ENCODE measurements at regions of chr4 and their contacts with region 1.

Region 1: GRCh38 chr4:94256828-94257227 is 49.2 kb downstream of the SMARCAD1 start:
- DNase-seq: peak in 1 of 9 donors; percentile 1
- ATAC-seq: no peak
- H3K4me3 ChIP-seq: no peak overlapping the region
- H3K4me3 Mint-ChIP-seq: no peak overlapping the region
- H3K27ac ChIP-seq: no peak overlapping the region
- H3K27ac Mint-ChIP-seq: peak overlapping the region in 1 of 9 donors; percentile 15
- H3K4me1 ChIP-seq: no peaks in the 10 kb centered on the region
- H3K4me1 Mint-ChIP-seq: peaks cover 0 to 9% (median under 1%) of the 10 kb centered on the region in 7 donors
- H3K27me3 ChIP-seq: no peaks in the 10 kb centered on the region
- H3K27me3 Mint-ChIP-seq: no peaks in the 10 kb centered on the region

Region 2: DNA sequence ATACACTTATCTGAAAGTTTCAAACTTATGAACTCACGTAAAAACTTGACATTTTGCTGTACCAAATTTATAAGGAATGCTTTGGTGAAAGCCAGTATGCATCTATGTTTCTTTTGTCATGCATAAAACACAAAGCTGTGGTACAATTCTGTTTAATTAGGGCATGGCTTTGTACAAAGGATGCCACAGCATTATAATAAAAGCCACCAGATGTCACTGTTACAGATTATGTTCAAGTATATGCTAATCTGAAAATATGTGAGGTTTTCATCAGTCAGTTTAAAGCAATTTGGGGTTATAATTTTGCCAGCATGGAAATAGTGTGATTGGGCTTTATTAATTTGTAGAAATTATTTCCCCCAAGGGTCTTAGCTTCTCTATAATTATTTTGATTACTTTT is 359.3 kb before region 1 on chr4:
- CTCF ChIA-PET with region 1: no interaction called
- POLR2A ChIA-PET with region 1: no interaction called
- intact Hi-C with region 1: loop called in 1 of 2 experiments (anchors 5 kb)
- DNase-seq: no peak
- ATAC-seq: no peak
- H3K4me3 ChIP-seq: no peak overlapping the region
- H3K4me3 Mint-ChIP-seq: no peak overlapping the region
- H3K27ac ChIP-seq: no peak overlapping the region
- H3K27ac Mint-ChIP-seq: no peak overlapping the region
- H3K4me1 ChIP-seq: no peaks in the 10 kb centered on the region
- H3K4me1 Mint-ChIP-seq: no peaks in the 10 kb centered on the region
- H3K27me3 ChIP-seq: no peaks in the 10 kb centered on the region
- H3K27me3 Mint-ChIP-seq: peaks cover 0 to 4% (median 0%) of the 10 kb centered on the region in 5 donors

Region 3: DNA sequence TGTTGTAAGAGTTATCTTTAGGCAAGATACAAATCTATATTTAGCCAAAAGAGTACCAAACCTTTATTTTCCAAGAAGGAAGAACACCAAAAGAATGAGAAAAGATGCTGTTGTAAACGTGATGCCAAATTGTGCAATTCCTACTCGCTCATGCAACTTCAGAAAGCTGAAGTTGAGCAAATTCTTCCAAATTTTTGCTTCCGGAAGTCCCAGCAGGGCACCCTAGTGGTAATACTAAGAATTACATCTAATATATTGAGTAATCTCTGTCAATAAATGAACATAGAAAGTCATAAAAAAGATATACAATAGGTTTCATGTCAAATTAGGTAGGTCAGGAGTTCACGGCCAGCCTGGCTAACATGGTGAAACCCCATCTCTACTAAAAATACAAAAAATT is 85.2 kb before region 1 on chr4:
- CTCF ChIA-PET with region 1: no interaction called
- POLR2A ChIA-PET with region 1: no interaction called
- intact Hi-C with region 1: no loop called
- DNase-seq: no peak
- ATAC-seq: no peak
- H3K4me3 ChIP-seq: no peak overlapping the region
- H3K4me3 Mint-ChIP-seq: no peak overlapping the region
- H3K27ac ChIP-seq: no peak overlapping the region
- H3K27ac Mint-ChIP-seq: no peak overlapping the region
- H3K4me1 ChIP-seq: no peaks in the 10 kb centered on the region
- H3K4me1 Mint-ChIP-seq: no peaks in the 10 kb centered on the region
- H3K27me3 ChIP-seq: no peaks in the 10 kb centered on the region
- H3K27me3 Mint-ChIP-seq: peaks cover 0 to 15% (median 11%) of the 10 kb centered on the region in 5 donors

Measured in naive thymus-derived CD4-positive, alpha-beta T cell (primary cell).